ENCODE measurements at regions of chr3 and their contacts with region 1.

Region 1: DNA sequence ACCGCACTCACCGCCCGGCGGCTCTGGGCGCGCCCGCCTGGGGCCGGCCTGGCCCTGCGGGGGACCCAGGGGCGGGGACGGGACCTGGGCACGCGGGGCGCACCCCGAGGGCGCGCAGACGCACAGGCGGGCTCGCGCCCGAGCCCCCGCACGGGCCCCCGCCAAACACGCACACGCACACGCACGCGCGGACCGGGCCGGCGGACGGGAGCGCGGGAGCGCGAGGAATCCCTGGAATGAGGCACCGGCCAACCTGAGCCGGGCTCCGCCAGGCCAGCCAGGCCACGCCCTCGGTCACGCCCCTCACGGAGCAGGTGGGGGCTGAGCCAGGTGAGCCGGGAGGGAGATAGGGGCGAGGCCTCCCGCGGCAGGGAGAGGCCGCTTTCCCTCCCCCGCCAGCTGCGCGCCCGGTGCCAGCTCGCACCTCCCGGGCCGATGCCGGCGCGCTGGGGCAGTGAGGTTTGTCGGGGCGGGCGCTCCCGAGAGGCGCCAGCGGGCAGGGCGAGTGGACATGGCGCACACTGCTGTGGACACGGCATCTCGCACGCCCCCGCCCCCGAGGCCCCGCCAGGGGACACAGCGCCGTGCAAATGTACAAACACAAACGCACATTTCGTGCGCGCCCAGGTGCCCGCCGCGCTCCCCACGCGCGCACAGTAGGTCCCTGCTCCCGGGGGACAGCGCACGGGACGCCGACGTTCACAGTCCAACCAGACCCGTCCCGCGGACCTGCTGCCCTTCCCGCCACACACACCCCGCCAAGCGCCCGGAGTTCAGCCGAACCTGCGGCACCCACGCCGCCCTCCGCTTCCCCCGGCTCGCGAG is 75.9 kb upstream of the VGLL4 start:
- DNase-seq: peak; percentile 67 to 73
- ATAC-seq: peak; percentile 60 to 87 (median 72)
- H3K4me3 ChIP-seq: peak overlapping the region; percentile 78 to 93 (median 88)
- H3K27ac ChIP-seq: peak overlapping the region; percentile 84 to 98 (median 93)
- H3K4me1 ChIP-seq: peaks cover 0 to 32% (median 25%) of the 10 kb centered on the region in 9 donors
- H3K27me3 ChIP-seq: peaks cover 0 to 13% (median 0%) of the 10 kb centered on the region in 7 donors
- CTCF ChIP-seq: no peak

Region 2: DNA sequence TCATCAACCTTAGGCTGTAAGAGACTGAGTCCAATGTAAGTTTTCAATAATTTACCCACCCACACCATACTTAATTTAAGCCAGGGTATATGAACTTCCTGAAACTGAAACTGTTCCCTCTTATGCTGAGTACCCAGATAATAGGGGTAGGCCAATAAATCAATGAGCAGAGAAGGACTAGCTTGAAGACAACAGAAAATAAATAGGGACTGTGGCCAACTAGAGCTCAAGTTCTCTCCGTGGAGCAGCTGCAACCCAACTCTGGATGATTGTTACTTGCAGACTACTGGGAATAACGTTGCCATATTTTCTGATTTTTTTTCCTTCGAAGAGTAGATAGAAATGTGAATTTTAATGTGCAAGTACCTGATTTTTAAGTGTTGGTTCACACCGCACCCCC is 319.4 kb before region 1 on chr3:
- intact Hi-C with region 1: no loop called
- DNase-seq: no peak
- ATAC-seq: no peak
- H3K4me3 ChIP-seq: no peak overlapping the region
- H3K27ac ChIP-seq: no peak overlapping the region
- H3K4me1 ChIP-seq: no peaks in the 10 kb centered on the region
- H3K27me3 ChIP-seq: no peaks in the 10 kb centered on the region
- CTCF ChIP-seq: no peak

Region 3: DNA sequence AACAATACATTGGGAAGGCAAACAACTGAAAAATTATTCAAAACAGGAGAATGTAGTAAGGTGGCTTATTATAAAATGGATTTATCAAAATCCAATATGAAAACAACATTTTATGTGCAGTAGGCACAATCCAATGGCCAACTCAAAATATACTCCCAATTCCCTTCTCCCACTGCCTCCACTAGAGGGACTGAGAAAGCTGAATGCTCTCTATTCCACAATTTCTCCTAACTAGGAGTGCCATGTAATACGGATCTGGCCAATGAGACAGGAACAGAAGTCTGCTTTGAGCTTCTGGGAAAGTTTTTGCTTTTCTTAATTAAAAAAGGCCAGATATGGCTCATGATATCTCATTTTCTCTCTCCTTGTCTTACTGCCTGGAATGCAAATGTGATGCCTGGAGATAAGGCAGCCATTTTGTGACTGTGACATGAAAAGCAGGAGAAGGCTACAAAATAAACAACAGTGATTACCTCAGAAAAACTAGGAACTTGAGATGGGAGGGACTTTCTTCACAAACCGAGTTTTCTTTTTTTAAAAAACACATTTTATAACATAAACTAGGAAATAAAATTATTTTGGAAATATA is 57.1 kb before region 1 on chr3:
- intact Hi-C with region 1: loop called in 3 of 10 experiments (anchors 5 to 10 kb)
- DNase-seq: no peak
- ATAC-seq: no peak
- H3K4me3 ChIP-seq: no peak overlapping the region
- H3K27ac ChIP-seq: no peak overlapping the region
- H3K4me1 ChIP-seq: peaks cover 2 to 28% (median 16%) of the 10 kb centered on the region in 9 donors
- H3K27me3 ChIP-seq: no peaks in the 10 kb centered on the region
- CTCF ChIP-seq: peak in 4 of 9 donors; percentile 10 to 33 (median 24)